PC-9 (cell line): ENCODE measurements at regions of chr19 and their contacts with region 1.

Region 1: GRCh38 chr19:1295169-1296012 is 9.7 kb downstream of the EFNA2 start:
- DNase-seq: no peak
- H3K4me3 ChIP-seq: no peak overlapping the region
- H3K27ac ChIP-seq: no peak overlapping the region
- H3K4me1 ChIP-seq: no peaks in the 10 kb centered on the region
- H3K27me3 ChIP-seq: peaks cover 14% of the 10 kb centered on the region; the same call in 1 of the 2 replicates
- CTCF ChIP-seq: no peak

Region 2: GRCh38 chr19:1311543-1312091 is 16.2 kb after region 1 on chr19:
- CTCF ChIA-PET with region 1: no interaction called
- POLR2A ChIA-PET with region 1: no interaction called
- intact Hi-C with region 1: no loop called
- DNase-seq: no peak
- H3K4me3 ChIP-seq: no peak overlapping the region
- H3K27ac ChIP-seq: no peak overlapping the region
- H3K4me1 ChIP-seq: peaks cover 9% of the 10 kb centered on the region
- H3K27me3 ChIP-seq: peaks cover 7% of the 10 kb centered on the region
- CTCF ChIP-seq: no peak

Region 3: DNA sequence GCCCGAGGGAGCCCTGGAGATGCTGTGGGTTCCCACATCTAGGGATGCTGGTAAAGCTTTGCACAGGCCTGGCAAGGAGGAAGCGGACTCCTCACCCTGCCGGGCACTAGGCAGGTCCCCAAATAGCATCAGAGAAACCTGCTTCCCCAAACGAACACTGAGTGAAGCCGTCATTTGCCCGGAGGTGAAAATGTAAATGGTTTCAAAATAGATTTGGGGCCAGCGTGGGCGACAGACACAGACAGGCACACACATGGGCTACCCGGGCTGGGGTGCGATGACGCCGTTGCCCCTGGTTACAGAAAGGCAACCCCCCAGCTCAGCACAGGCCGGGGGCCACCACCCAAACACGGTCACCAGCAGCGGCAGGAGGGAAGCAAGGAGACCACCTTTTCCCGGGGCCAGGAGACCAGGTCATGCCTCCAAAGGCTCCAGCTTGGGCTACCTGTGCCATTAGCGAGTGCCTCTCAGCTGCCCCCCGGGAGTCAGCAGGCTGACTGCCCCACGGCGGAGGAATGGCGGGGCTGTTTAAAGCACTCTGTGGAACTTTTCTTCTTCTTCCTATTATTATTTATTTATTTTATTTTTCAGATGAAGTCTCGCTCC is 40.8 kb after region 1 on chr19:
- CTCF ChIA-PET with region 1: no interaction called
- POLR2A ChIA-PET with region 1: interaction called, 17 read pairs
- intact Hi-C with region 1: no loop called
- DNase-seq: no peak
- H3K4me3 ChIP-seq: no peak overlapping the region
- H3K27ac ChIP-seq: no peak overlapping the region
- H3K4me1 ChIP-seq: no peaks in the 10 kb centered on the region
- H3K27me3 ChIP-seq: 0 out of 2 replicates have a peak, but pooled peaks cover 4% of the 10 kb centered on the region
- CTCF ChIP-seq: no peak